ENCODE measurements at regions of chr3 and their contacts with region 1.

Region 1: DNA sequence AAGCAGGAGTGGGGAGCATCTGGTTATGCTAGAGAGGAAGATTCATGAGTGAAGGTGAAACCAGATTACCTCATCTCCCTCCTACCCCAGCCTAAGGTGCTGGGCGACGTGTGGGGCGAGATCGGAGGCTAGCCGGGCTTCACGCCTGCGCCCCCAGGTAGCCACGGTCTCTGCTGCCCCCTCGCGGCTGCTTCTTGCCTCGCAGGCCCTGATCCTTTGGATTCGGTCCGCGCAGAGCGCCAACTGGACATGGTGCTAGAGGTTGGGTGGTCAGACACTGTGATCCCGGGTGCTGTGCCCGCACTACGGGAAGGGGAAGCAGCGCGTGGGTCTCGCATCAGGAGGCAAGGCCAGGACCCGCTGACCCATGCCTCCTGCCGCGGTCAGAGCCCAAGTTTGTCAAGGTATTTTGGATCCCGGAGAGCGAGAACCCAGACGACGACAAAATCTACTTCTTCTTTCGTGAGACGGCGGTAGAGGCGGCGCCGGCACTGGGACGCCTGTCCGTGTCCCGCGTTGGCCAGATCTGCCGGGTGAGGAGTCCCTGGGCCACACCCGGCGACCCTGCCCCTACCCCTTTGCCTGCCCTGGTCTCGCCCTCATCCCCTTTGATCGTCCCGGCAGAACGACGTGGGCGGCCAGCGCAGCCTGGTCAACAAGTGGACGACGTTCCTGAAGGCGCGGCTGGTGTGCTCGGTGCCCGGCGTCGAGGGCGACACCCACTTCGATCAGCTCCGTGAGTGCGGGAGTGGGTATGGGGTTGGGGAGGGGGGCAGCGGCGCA is 4.2 kb downstream of the SEMA3B start:
- DNase-seq: peak; percentile 79 to 98 (median 92)

Region 2: GRCh38 chr3:50121416-50122032 is 151.6 kb before region 1 on chr3:
- intact Hi-C with region 1: loop called (anchors 1 kb)
- DNase-seq: peak; percentile 61 to 97 (median 82)

Region 3: DNA sequence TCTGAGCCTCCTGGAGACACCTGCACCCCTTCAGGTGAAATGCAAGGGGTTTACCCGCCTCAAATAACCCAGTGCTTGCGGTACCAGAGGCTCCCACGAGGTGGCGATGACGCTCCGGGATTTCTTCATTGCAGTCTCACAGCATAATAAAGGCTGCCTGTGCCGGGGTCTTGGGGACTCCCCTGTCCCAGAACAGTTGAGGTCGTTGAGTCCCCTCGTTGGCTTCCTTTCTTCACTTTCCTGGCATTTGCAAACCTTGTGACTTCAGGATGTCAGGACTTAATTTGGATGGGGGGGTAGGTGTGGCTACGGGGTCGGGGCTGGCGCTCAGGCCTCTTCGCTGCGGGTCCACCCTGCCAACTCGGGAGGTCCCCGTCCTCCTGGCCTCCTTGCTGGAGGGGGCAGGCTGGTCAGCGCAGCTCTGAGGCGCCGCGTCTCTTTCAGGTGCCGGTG is 80.4 kb before region 1 on chr3:
- intact Hi-C with region 1: loop called (anchors 5 kb)
- DNase-seq: peak in 9 of 10 donors; percentile 49 to 94 (median 83)

Region 4: DNA sequence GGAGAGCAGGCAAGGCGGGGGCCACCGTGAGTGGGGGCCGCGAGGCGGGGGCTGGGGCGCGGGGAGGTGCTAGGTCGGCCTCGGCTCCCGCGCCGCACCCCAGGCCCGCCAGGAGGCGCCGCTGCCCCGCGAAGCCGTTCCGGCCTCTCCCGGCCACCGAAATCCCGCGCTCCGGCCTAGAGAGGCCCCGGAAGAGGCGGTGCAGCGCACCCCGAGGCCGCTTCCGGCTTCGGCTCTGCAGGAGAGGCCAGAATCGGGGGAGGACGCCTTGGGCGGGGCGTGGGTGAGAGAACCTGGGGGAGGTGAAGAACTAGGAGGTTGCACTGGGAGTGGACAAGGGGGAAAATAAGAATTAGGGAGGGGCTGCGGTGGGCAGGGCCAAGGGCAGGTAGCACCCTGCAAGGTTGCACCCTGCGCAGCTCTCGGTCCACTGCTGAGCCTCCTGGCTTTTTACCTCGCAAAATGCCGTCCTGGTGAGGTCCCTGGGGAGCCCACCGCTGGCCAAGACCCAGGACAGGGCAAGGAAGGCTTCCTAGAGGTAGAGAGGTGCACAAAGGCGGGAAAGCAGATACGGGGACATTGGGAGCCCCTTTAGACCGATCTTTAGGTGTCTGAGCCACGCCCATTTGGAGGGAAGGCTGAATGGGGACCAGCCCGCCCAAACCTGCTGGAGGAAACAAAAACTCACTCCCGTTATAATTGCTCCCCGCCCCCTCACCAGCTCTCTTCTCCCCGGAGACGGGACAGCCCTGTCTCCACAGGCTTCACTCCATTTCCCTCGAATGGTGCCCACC is 45.5 kb before region 1 on chr3:
- intact Hi-C with region 1: loop called (anchors 1 kb)
- DNase-seq: peak; percentile 82 to 99 (median 90)

Region 5: GRCh38 chr3:50260027-50260941 is 12.8 kb before region 1 on chr3:
- intact Hi-C with region 1: loop called (anchors 1 kb)
- DNase-seq: peak; percentile 91 to 99 (median 94)

Region 6: DNA sequence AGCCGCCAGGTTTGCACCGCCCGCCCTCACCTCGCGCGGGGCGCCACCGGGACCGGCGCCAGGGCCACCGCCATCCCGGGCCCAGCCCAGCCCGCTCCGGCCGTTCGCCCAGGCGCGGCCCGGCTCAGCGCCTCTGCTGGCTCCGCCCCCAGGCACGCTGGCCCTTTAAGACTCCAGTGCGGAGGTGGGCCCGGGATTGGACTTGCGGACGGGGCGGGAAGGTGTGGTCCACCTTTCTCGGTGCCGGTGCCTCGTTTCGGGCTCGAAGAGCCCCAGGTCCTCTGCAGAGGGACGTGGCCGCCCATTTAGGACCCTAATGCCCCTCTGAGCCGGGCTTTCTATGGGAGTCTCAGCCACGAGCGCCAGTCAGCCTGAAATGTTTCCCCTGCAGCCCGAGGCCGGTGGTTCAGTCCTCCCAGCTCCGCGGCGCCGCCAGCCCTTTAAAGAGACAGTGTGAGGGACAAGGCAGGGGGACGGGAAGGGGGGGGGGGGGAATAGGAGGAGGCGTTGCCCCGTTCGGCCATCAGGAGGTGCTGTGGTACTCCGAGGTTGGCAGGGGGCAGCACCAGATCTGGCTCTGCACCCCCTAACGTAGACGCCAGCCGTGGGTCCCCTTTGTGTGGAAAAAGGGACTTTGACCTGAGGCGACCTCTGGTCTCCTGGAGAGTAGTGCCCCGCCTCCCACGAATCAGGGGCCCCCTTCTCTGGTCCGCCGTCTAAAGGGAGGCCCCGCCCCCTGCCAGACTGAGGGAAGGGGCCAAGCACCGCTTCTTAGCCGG is 48.4 kb after region 1 on chr3:
- intact Hi-C with region 1: loop called (anchors 10 kb)
- DNase-seq: peak; percentile 84 to 99 (median 90)

Measured in posterior cingulate gyrus (tissue), 11 donors.